ENCODE measurements at regions of chr19 and their contacts with region 1.

Region 1: DNA sequence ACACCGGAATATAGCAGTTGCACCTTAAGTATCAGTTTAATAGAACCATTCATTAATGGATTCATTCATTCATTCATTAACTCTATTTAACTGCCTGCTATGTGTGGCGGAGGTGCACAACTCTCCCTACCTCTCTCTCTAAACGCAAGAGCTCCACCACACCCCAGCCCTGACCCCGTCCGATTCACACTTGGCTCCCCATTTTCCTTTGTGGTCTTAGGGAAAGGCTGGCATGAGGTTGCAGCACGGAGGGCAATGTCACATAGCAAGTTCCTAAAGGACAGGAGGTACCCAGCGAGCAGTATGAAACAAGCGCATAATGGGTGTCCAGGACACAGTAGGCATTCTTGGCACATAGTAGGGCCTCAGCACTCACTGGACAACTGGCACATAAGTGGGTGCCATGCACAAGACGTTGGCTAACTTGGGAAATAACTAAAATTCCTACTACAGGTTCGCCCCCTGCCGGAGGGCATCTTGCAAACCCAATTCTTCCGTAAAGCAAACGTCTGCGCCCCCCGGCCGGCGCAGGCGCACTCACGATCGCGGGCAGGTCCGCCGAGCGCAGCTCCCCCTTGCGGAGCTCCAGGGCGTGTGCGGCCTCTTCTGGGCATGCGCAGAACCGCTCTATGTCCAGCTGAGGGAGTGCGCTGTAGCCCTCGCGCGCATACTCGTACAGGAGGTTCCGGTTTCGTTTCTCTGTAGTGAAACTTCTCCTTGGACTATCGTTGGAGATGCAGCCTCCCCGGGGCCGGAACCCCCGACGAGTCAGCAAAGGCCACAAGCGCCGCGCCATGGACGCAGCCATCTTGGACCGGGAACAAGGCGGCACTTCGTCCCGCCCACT is at the start of gene SARS2:
- DNase-seq: peak; percentile 94 to 97 (median 94)
- H3K4me3 ChIP-seq: peak within 1 kb of the TSS; percentile 70 to 92 (median 86)
- H3K4me3 Mint-ChIP-seq: peak within 1 kb of the TSS; percentile 90 to 96
- H3K27ac ChIP-seq: peak within 1 kb of the TSS; percentile 69 to 96
- H3K27ac Mint-ChIP-seq: peak within 1 kb of the TSS; percentile 94 to 98 (median 97)
- H3K4me1 ChIP-seq: peaks cover 16 to 25% of the 10 kb centered on the region in 2 donors
- H3K4me1 Mint-ChIP-seq: peaks cover 15% of the 10 kb centered on the region
- H3K27me3 ChIP-seq: no peaks in the 10 kb centered on the region
- H3K27me3 Mint-ChIP-seq: peaks cover 0 to 2% (median 0%) of the 10 kb centered on the region in 3 donors
- CTCF ChIP-seq: peak; percentile 100
- polyA plus RNA-seq, gene SARS2: 8.1 to 21.9 (median 8.3) TPM

Region 2: DNA sequence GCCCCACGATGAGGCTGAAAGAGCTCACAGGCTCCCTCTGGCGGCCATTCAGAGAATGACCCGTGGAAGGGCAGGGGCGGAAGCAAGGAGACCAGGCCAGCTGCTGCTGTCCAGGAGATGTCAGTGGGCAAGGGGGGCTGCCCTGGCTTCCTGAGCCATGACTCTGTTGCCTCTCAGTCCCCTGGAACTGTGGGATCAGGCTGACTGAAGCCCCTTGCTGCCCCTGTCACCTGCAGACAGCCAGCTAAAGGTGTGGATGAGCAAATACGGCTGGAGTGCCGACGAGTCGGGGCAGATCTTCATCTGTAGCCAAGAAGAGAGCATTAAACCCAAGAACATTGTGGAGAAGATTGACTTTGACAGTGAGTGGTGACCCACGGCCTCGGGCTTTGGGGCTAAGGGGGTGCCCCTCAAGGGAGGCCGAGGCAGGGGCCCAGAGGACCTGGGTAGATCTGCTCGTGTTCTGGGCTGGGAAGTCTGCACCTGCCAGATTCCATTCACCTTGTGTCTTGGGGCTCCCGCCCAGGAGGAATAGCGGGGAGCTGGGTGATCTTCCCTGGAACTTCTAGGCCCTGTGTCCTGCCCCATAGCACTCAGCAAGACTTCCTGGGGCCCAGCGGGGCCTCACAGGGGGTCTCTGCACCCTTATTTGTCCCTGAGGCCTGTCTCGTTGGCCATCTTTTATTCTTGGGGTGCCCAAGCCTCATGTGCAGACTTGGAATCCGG is 295.2 kb before region 1 on chr19:
- intact Hi-C with region 1: loop called in 1 of 2 experiments (anchors 10 kb)
- DNase-seq: peak; percentile 64 to 72 (median 71)
- H3K4me3 ChIP-seq: no peak overlapping the region
- H3K4me3 Mint-ChIP-seq: peak overlapping the region in 1 of 2 donors; percentile 48
- H3K27ac ChIP-seq: peak overlapping the region; percentile 17 to 25
- H3K27ac Mint-ChIP-seq: peak overlapping the region; percentile 45 to 92 (median 78)
- H3K4me1 ChIP-seq: peaks cover 10 to 17% of the 10 kb centered on the region in 2 donors
- H3K4me1 Mint-ChIP-seq: peaks cover 21% of the 10 kb centered on the region
- H3K27me3 ChIP-seq: no peaks in the 10 kb centered on the region
- H3K27me3 Mint-ChIP-seq: peaks cover 0 to 1% (median 0%) of the 10 kb centered on the region in 3 donors
- CTCF ChIP-seq: peak; percentile 85

Region 3: GRCh38 chr19:38729653-38730469 is 200.3 kb before region 1 on chr19:
- intact Hi-C with region 1: loop called in 1 of 2 experiments (anchors 10 kb)
- DNase-seq: peak; percentile 53 to 67 (median 53)
- H3K4me3 ChIP-seq: no peak overlapping the region
- H3K4me3 Mint-ChIP-seq: no peak overlapping the region
- H3K27ac ChIP-seq: no peak overlapping the region
- H3K27ac Mint-ChIP-seq: peak overlapping the region in 5 of 7 donors; percentile 15 to 78 (median 48)
- H3K4me1 ChIP-seq: peaks cover 17 to 20% of the 10 kb centered on the region in 2 donors
- H3K4me1 Mint-ChIP-seq: peaks cover 24% of the 10 kb centered on the region
- H3K27me3 ChIP-seq: no peaks in the 10 kb centered on the region
- H3K27me3 Mint-ChIP-seq: peaks cover 0 to 3% (median 1%) of the 10 kb centered on the region in 3 donors
- CTCF ChIP-seq: peak; percentile 83

Region 4: GRCh38 chr19:39246951-39247669 is 317.0 kb after region 1 on chr19:
- intact Hi-C with region 1: no loop called
- DNase-seq: peak in 2 of 3 donors; percentile 1 to 12
- H3K4me3 ChIP-seq: no peak overlapping the region
- H3K4me3 Mint-ChIP-seq: peak overlapping the region in 1 of 2 donors; percentile 73
- H3K27ac ChIP-seq: no peak overlapping the region
- H3K27ac Mint-ChIP-seq: no peak overlapping the region
- H3K4me1 ChIP-seq: peaks cover 0 to 7% of the 10 kb centered on the region in 2 donors
- H3K4me1 Mint-ChIP-seq: peaks cover 4% of the 10 kb centered on the region
- H3K27me3 ChIP-seq: peaks cover 2 to 24% of the 10 kb centered on the region in 2 donors
- H3K27me3 Mint-ChIP-seq: peaks cover 17 to 29% (median 26%) of the 10 kb centered on the region in 3 donors
- CTCF ChIP-seq: no peak